Activated CD4-positive, alpha-beta T cell treated with anti-CD3 and anti-CD28 coated beads for 36 hours (primary cell): ENCODE measurements at regions of chr5 and their contacts with region 1.

Region 1: DNA sequence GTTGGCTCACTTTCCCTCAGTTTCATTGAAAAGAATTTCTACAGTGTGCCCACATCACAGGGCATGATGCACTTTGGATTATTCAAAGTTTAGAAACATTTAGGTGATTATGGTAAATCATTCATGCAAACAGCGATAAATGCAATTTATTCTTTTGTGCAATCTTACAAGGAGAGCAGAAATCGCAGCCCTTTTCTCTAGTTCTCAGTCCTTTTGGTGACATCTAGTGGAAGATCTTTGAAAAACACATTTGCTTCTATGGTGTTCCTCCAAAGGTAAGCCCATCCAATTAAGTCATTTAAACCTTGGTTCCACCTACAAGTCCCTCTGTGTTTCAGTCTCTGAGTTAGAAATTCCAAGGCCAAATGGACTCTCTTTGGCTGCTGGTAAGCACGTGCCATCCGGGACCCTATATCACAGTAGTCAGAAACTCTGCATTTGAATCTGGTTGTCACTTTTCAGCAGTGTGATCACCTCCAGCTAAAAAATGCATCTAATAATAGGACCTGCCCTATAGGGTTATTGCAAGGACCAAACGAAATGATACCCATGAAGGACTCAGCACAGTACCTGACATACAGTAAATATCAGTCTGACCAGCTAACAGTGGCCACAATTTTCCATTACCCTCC is 66.4 kb downstream of the MACROH2A1 start:
- DNase-seq: no peak
- ATAC-seq: peak; percentile 57
- H3K4me3 Mint-ChIP-seq: no peak overlapping the region
- H3K27ac Mint-ChIP-seq: no peak overlapping the region
- H3K4me1 Mint-ChIP-seq: no peaks in the 10 kb centered on the region
- H3K27me3 Mint-ChIP-seq: no peaks in the 10 kb centered on the region

Region 2: DNA sequence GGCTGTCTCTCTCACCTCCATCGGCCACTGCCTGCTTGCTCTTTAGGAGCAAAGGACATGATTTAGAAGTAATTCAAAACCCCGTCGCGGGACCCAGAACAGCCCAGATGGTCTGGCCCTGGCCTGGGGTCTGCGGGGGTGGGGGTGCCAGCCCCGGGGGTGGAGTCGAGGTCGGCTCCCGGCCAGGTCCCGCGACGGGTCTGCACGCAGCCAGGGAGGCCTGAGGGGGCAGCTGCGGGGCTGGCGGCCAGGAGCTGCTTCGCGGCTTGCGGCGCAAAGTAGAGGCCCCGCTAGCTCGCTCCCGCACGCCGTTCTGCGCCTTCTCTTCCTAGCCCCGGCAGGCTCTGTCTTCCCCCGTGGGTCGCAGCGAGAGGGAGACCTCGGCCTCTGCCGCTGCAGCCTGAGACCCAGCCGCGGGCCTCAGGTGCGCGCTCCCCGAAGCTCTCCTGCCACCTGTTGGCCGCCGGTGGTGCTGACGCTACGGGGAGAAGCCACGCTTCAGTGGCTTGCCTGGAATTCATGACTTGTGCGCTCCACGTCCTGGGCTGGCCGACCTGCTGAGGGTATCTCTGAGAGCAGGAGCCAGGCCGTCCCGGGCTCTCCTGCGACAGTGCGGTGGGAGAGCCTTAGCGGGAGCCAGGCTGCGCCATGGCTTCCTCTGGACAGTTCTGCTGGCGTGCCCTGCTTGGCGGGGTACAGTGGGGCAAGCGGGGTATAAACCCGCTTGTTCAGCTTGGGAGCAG is 141.4 kb before region 1 on chr5:
- CTCF ChIA-PET with region 1: interaction called, 3 read pairs
- POLR2A ChIA-PET with region 1: no interaction called
- intact Hi-C with region 1: loop called in 1 of 2 experiments (anchors 5 kb)
- DNase-seq: peak; percentile 89
- ATAC-seq: peak; percentile 98
- H3K4me3 Mint-ChIP-seq: peak overlapping the region; percentile 53
- H3K27ac Mint-ChIP-seq: no peak overlapping the region
- H3K4me1 Mint-ChIP-seq: peaks cover 2% of the 10 kb centered on the region
- H3K27me3 Mint-ChIP-seq: peaks cover 13% of the 10 kb centered on the region